ENCODE measurements at regions of chr22 and their contacts with region 1.

Region 1: GRCh38 chr22:41448189-41448808 is 1.7 kb upstream of the TOB2 start:
- DNase-seq: peak; percentile 87 to 98
- ATAC-seq: peak; percentile 76 to 85
- H3K4me3 ChIP-seq: peak overlapping the region; percentile 96
- H3K27ac ChIP-seq: peak overlapping the region; percentile 100
- H3K4me1 ChIP-seq: peaks cover 10% of the 10 kb centered on the region
- CTCF ChIP-seq: no peak
- EP300 ChIP-seq: no peak
- POLR2A ChIP-seq: no peak; the same call in 1 of the 2 replicates
- RAD21 ChIP-seq: no peak

Region 2: DNA sequence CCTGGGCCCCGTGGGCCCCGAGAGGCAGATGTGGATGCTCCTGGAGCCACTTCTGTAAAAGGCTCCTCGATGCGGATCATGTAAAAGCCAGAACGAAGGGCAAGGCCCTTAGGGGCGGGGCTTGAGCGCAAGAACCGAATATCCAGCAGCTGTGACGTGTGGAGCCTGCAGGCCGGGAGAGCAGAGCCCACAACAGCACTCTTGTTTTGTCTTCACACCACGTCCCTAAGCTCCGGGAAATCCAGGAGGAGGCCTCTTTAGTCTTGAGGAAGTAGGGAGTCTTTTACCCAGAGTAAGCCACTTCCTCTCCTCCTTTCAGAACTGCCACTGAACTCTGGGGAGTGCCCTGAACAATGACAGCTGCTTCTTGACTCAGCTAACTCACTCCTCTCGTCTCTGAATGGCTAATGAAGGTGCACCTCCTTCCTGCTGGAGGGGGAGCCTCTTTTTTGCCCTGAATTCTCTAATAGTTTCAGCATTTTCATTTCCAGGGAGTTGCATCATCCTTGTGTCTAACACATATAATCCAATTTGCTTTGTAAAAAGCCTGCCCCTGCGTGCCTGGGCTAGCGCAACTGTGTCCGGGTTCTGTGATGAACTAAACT is 230.6 kb before region 1 on chr22:
- CTCF ChIA-PET with region 1: no interaction called
- POLR2A ChIA-PET with region 1: no interaction called
- DNase-seq: no peak
- ATAC-seq: no peak
- H3K4me3 ChIP-seq: no peak overlapping the region
- H3K27ac ChIP-seq: peak overlapping the region in 1 of 2 experiments; percentile 24; a peak in 1 of 6 replicates
- H3K4me1 ChIP-seq: peaks cover 5% of the 10 kb centered on the region; the same call in 1 of the 3 replicates
- CTCF ChIP-seq: no peak
- EP300 ChIP-seq: no peak
- POLR2A ChIP-seq: no peak
- RAD21 ChIP-seq: no peak

Region 3: DNA sequence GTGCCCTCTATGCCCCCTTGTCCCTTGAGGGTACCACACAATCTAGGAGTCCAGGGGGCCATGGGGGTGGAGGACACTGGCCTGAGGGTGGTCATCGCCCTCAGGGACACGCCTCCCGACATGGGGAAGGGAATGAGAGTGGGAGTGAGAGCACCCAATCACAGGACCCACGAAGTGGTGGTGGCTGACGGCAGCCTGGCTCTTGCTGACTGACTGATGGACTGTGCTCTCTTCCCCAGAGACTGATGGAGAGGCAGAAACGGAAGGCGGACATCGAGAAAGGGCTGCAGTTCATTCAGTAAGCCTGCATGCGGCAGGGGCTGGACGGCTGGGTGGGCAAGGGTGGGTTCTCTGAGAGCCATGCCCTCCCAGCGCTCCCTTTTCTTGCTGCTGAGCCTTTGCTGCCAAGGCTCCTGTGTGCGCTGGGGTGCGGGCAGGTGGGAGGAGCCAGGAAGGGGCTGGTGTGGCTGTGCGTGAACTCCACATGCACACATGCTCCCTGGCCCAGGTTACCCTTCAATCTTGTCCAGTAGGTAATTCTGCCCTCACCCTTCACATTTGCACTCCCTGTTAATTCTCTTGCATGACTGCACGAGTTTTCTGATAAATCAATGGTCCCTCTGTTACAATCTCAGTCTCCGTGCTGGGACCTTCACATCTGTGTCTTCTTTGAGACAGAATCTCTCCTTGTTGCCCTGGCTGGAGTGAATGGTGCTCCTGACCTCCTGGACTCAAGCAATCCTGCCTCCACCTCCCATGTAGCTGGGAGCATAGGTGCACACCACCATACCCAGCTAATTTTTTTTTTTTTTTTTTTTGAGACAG is 127.7 kb before region 1 on chr22:
- CTCF ChIA-PET with region 1: no interaction called
- POLR2A ChIA-PET with region 1: no interaction called
- DNase-seq: no peak
- ATAC-seq: no peak
- H3K4me3 ChIP-seq: no peak overlapping the region
- H3K27ac ChIP-seq: no peak overlapping the region
- H3K4me1 ChIP-seq: no peaks in the 10 kb centered on the region
- CTCF ChIP-seq: no peak
- EP300 ChIP-seq: no peak
- POLR2A ChIP-seq: no peak
- RAD21 ChIP-seq: no peak

Region 4: GRCh38 chr22:41381329-41382097 is 66.8 kb before region 1 on chr22 and contains the start of gene TEF:
- CTCF ChIA-PET with region 1: no interaction called
- POLR2A ChIA-PET with region 1: interaction called, 20 read pairs
- DNase-seq: peak; percentile 97
- ATAC-seq: peak; percentile 91 to 97
- H3K4me3 ChIP-seq: peak within 1 kb of the TSS; percentile 99
- H3K27ac ChIP-seq: peak within 1 kb of the TSS; percentile 96 to 98
- H3K4me1 ChIP-seq: peaks cover 13% of the 10 kb centered on the region; the same call in 2 of the 3 replicates
- CTCF ChIP-seq: no peak
- EP300 ChIP-seq: no peak
- POLR2A ChIP-seq: no peak
- RAD21 ChIP-seq: no peak
- polyA plus RNA-seq, gene TEF: 2.8 and 4.3 TPM in 2 replicates

Region 5: GRCh38 chr22:41394012-41394356 is 54.3 kb before region 1 on chr22:
- CTCF ChIA-PET with region 1: no interaction called
- POLR2A ChIA-PET with region 1: no interaction called
- DNase-seq: no peak
- ATAC-seq: no peak
- H3K4me3 ChIP-seq: no peak overlapping the region
- H3K27ac ChIP-seq: no peak overlapping the region
- H3K4me1 ChIP-seq: no peaks in the 10 kb centered on the region
- CTCF ChIP-seq: no peak
- EP300 ChIP-seq: no peak
- POLR2A ChIP-seq: no peak
- RAD21 ChIP-seq: no peak

Region 6: GRCh38 chr22:41468381-41469217 is 20.3 kb after region 1 on chr22 and contains the starts of genes ACO2 and PHF5A:
- CTCF ChIA-PET with region 1: no interaction called
- POLR2A ChIA-PET with region 1: interaction called, 41 read pairs
- DNase-seq: peak; percentile 92 to 96
- ATAC-seq: peak; percentile 96
- H3K4me3 ChIP-seq: peak within 1 kb of the TSS; percentile 74
- H3K27ac ChIP-seq: peak within 1 kb of the TSS; percentile 93 to 95
- H3K4me1 ChIP-seq: peaks cover 15% of the 10 kb centered on the region
- CTCF ChIP-seq: no peak
- EP300 ChIP-seq: no peak
- POLR2A ChIP-seq: peak; percentile 50
- RAD21 ChIP-seq: no peak
- polyA plus RNA-seq, gene ACO2: 30.7 and 32.8 TPM in 2 replicates
- polyA plus RNA-seq, gene PHF5A: 69.4 and 82.6 TPM in 2 replicates